HepG2 (cell line): ENCODE measurements at regions of chr19 and their contacts with region 1.

Region 1: GRCh38 chr19:2867025-2867991 is at the start of gene ZNF556:
- DNase-seq: peak; percentile 100
- ATAC-seq: peak; percentile 96
- H3K4me3 ChIP-seq: peak within 1 kb of the TSS; percentile 72 to 94 (median 80)
- H3K27ac ChIP-seq: peak within 1 kb of the TSS; percentile 90
- H3K4me1 ChIP-seq: peaks cover 41% of the 10 kb centered on the region
- H3K27me3 ChIP-seq: no peaks in the 10 kb centered on the region
- CTCF ChIP-seq: peak; percentile 25
- EP300 ChIP-seq: peak in 1 of 2 experiments; percentile 24; a peak in 1 of 4 replicates
- POLR2A ChIP-seq: peak; percentile 99
- RAD21 ChIP-seq: peak; percentile 56
- total RNA-seq, gene ZNF556: 28.6 and 41.2 TPM in 2 replicates

Region 2: GRCh38 chr19:2782936-2783780 is 84.2 kb before region 1 on chr19 and contains the start of gene SGTA:
- CTCF ChIA-PET with region 1: no interaction called
- POLR2A ChIA-PET with region 1: interaction called, 14 read pairs
- in situ Hi-C with region 1: no loop called
- intact Hi-C with region 1: loop called (anchors 1 kb)
- DNase-seq: peak; percentile 99
- ATAC-seq: peak; percentile 84
- H3K4me3 ChIP-seq: peak within 1 kb of the TSS; percentile 81 to 98 (median 93)
- H3K27ac ChIP-seq: peak within 1 kb of the TSS; percentile 76
- H3K4me1 ChIP-seq: peaks cover 78% of the 10 kb centered on the region
- H3K27me3 ChIP-seq: no peaks in the 10 kb centered on the region; a peak in 1 of 5 replicates
- CTCF ChIP-seq: peak; percentile 77
- EP300 ChIP-seq: 0 out of 4 replicates have a peak, but pooled peaks of 1 of the 2 experiments have one; percentile 13
- POLR2A ChIP-seq: peak; percentile 48 to 78; a peak in 3 of 4 replicates
- RAD21 ChIP-seq: peak; percentile 34
- total RNA-seq, gene SGTA: 47.4 and 47.5 TPM in 2 replicates

Region 3: GRCh38 chr19:2820112-2820702 is 47.1 kb before region 1 on chr19:
- CTCF ChIA-PET with region 1: interaction called, 7 read pairs
- POLR2A ChIA-PET with region 1: interaction called, 10 read pairs
- in situ Hi-C with region 1: loop called (anchors 10 kb)
- intact Hi-C with region 1: loop called (anchors 2 kb)
- DNase-seq: no peak
- ATAC-seq: peak; percentile 68
- H3K4me3 ChIP-seq: peak overlapping the region; percentile 60 to 84 (median 81)
- H3K27ac ChIP-seq: peak overlapping the region; percentile 21
- H3K4me1 ChIP-seq: no peaks in the 10 kb centered on the region; the same call in 1 of the 2 replicates
- H3K27me3 ChIP-seq: no peaks in the 10 kb centered on the region
- CTCF ChIP-seq: no peak
- EP300 ChIP-seq: no peak
- POLR2A ChIP-seq: peak in 1 of 2 experiments; percentile 0; a peak in 1 of 4 replicates
- RAD21 ChIP-seq: no peak

Region 4: DNA sequence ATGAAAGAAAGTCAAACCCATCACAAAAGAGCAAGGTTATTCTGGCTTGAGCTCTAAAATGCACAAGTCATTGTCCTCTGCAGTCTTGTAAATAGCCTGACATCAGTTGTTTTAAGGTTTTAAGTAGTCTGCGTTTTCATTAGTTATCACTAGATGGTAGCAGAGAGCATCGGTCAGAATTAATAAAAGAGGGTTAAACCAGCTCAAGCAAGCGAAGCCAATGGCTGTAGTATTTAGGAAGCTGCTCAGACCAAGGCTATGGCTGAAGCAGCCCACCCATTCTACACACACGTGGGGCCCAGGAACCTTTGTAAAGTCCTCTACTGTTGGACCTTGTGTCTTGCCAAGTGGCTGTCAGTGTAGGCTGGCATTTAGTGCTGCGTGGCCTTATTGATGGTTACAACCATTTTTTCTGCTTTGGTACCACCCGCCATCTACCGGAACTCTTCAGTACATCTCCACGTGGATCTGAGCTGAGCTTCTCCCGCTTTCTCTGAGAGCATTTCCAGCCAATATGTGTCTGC is 20.1 kb after region 1 on chr19:
- CTCF ChIA-PET with region 1: no interaction called
- POLR2A ChIA-PET with region 1: interaction called, 11 read pairs
- in situ Hi-C with region 1: no loop called
- intact Hi-C with region 1: no loop called
- DNase-seq: peak; percentile 76
- ATAC-seq: peak; percentile 69
- H3K4me3 ChIP-seq: no peak overlapping the region; a peak in 1 of 6 replicates
- H3K27ac ChIP-seq: no peak overlapping the region
- H3K4me1 ChIP-seq: peaks cover 14% of the 10 kb centered on the region
- H3K27me3 ChIP-seq: no peaks in the 10 kb centered on the region
- CTCF ChIP-seq: peak; percentile 72
- EP300 ChIP-seq: no peak
- POLR2A ChIP-seq: no peak
- RAD21 ChIP-seq: peak; percentile 52

Region 5: GRCh38 chr19:2944775-2945574 is 77.7 kb after region 1 on chr19 and contains the start of gene ZNF77:
- CTCF ChIA-PET with region 1: no interaction called
- POLR2A ChIA-PET with region 1: interaction called, 14 read pairs
- in situ Hi-C with region 1: no loop called
- intact Hi-C with region 1: no loop called
- DNase-seq: peak; percentile 99
- ATAC-seq: peak; percentile 97
- H3K4me3 ChIP-seq: peak within 1 kb of the TSS; percentile 84 to 90 (median 88)
- H3K27ac ChIP-seq: peak within 1 kb of the TSS; percentile 86
- H3K4me1 ChIP-seq: peaks cover 30% of the 10 kb centered on the region
- H3K27me3 ChIP-seq: no peaks in the 10 kb centered on the region; a peak in 1 of 5 replicates
- CTCF ChIP-seq: 0 out of 2 replicates have a peak, but pooled peaks have one; percentile 13
- EP300 ChIP-seq: no peak
- POLR2A ChIP-seq: peak; percentile 64 to 89; a peak in 3 of 4 replicates
- RAD21 ChIP-seq: 0 out of 2 replicates have a peak, but pooled peaks have one; percentile 34
- total RNA-seq, gene ZNF77: 11.5 and 12.6 TPM in 2 replicates